ENCODE measurements at regions of chr3 and their contacts with region 1.

Region 1: DNA sequence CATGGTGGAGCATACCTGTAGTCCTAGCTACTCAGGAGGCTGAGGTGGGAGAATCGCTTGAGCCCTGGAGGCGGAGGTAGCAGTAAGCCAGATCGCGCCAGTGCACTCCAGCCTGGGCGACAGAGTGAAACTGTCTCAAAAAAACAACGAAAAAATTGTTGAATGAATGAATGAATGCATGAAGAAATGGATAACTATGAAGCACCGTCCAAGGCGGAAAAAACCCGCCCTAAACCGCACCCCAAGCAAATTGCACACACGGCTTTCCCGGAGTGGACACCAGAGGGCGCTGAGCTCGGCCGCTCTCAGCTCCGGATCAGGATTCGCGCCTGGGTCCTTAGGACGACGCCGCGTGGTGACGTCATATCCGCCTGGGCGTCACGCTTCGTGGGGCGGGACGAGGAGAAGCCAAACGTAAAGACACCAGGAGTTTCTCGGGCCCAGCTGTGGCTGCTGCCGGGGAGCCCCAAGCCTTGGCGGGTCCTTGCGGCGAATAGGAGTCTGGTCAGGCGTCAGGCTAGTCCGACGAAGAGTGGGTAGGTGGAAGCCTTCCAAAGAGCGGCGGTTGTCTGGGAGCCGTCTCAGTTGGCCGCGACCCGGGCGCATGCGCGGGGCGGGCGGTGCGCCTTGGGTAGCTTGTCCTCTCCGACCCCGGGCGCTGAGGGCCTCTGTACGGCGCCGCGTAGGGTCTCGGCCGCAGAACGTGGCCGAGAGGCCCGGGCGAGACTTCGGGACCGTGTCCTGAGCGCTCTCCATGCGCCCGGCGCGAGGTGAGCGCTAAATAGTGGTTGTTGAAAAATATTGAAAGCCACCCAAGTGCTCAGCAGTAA is at the starts of genes HTD2 and RPP14:
- DNase-seq: peak; percentile 99
- ATAC-seq: peak; percentile 90
- H3K4me3 Mint-ChIP-seq: peak within 1 kb of the TSS; percentile 97
- H3K27ac Mint-ChIP-seq: peak within 1 kb of the TSS; percentile 97
- H3K4me1 Mint-ChIP-seq: peaks cover 30% of the 10 kb centered on the region
- H3K27me3 Mint-ChIP-seq: peaks cover 2% of the 10 kb centered on the region
- total RNA-seq, gene HTD2: 2.3 to 7.9 TPM
- total RNA-seq, gene RPP14: 16.4 to 16.9 TPM

Region 2: DNA sequence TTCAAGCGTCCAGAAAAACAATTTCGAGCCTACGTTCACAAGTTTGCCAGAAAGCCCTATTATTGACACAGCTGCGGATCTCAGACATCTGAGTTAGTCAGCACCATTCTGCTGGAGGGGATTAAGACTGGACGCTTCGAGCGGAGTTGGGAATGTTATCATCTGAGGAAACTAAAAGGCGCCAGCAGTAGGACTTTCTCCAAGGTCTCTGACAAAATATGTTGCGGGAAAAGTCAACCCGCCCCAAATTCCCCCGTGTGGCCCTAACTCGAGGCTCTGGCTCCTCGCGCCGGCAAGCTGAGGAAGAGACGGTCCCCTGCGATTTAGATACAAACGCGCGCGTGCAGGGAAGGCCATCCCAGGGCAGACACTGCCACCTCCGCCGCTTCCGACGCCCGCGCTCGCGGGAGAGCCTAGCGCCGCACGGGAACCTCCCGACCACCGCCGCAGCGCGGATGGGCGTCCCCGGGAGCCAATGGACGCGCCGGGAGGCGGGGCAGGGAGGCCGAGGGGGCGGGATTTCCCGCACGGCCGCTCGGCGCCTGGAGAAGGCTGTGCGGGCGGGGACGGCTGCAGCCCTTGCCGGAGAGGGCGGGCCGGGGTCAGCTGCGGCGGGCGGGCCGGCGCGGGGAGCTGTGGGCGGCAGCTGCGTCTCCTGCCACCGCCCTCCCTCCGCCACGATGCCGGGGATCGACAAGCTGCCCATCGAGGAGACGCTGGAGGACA is 1078.7 kb before region 1 on chr3 and contains the start of gene APPL1:
- CTCF ChIA-PET with region 1: no interaction called
- POLR2A ChIA-PET with region 1: no interaction called
- intact Hi-C with region 1: loop called in 1 of 2 experiments (anchors 1 kb)
- DNase-seq: peak; percentile 94
- ATAC-seq: peak; percentile 92
- H3K4me3 Mint-ChIP-seq: peak within 1 kb of the TSS; percentile 88
- H3K27ac Mint-ChIP-seq: peak within 1 kb of the TSS; percentile 78
- H3K4me1 Mint-ChIP-seq: peaks cover 29% of the 10 kb centered on the region
- H3K27me3 Mint-ChIP-seq: no peaks in the 10 kb centered on the region
- total RNA-seq, gene APPL1: 38.4 to 39.4 TPM

Region 3: DNA sequence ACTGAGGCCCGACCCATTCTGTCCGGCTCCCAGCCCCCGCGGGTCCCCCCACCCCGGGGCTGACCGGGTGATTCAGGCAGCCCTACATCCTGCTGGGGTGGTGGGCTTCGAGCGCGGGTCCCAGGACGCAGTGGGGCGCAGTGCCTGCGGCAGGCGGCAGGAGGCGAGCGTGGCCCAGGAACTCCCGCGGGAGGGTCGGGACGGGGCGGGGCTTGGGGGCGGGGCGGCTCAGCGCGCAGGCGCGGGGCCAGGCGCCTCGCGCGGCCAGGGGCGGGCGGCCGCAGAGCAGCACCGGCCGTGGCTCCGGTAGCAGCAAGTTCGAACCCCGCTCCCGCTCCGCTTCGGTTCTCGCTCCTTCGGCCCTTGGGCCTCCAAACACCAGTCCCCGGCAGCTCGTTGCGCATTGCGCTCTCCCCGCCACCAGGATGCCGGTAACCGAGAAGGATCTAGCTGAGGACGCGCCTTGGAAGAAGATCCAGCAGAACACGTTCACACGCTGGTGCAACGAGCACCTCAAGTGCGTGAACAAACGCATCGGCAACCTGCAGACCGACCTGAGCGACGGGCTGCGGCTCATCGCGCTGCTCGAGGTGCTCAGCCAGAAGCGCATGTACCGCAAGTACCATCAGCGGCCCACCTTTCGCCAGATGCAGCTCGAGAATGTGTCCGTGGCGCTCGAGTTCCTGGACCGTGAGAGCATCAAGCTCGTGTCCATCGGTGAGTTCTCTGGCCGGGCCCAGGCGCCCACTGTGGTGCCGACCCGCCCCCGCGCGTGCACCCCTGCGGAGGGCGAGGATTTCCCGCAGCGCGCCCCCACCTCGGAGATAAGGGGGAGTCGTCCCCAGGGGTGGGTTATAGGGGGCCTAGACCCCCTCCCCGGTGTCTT is 297.7 kb before region 1 on chr3 and contains the start of gene FLNB:
- CTCF ChIA-PET with region 1: interaction called, 4 read pairs
- POLR2A ChIA-PET with region 1: no interaction called
- intact Hi-C with region 1: loop called in 1 of 2 experiments (anchors 1 kb)
- DNase-seq: peak; percentile 91
- ATAC-seq: peak; percentile 80
- H3K4me3 Mint-ChIP-seq: peak within 1 kb of the TSS; percentile 88
- H3K27ac Mint-ChIP-seq: peak within 1 kb of the TSS; percentile 89
- H3K4me1 Mint-ChIP-seq: peaks cover 38% of the 10 kb centered on the region
- H3K27me3 Mint-ChIP-seq: no peaks in the 10 kb centered on the region
- total RNA-seq, gene FLNB: 25.4 to 29.1 TPM

Region 4: DNA sequence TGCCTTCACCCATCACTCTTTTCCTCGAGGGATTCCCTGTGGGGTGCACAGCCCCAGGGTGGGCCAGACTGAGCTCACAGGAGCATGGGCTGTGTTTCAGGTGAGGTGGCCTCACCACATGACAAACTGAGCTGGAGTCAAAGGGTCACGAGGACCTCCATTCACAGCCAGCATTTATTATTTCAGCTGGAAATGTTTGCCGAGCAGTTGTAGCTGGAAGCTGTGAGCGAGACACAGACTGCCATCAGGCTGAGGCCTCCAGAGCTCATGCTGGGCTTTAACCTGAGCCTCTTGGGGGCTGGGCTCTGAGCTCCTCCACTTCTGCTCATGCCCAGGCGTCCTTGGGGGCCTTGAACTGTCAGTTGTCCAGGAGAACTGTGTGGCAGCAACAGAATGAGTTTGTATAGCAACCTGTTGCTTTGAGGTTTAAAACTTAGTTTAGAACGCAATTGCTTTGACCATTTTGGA is 240.4 kb before region 1 on chr3:
- CTCF ChIA-PET with region 1: no interaction called
- POLR2A ChIA-PET with region 1: no interaction called
- intact Hi-C with region 1: no loop called
- DNase-seq: no peak
- ATAC-seq: no peak
- H3K4me3 Mint-ChIP-seq: no peak overlapping the region
- H3K27ac Mint-ChIP-seq: no peak overlapping the region
- H3K4me1 Mint-ChIP-seq: peaks cover 14% of the 10 kb centered on the region
- H3K27me3 Mint-ChIP-seq: no peaks in the 10 kb centered on the region

Region 5: DNA sequence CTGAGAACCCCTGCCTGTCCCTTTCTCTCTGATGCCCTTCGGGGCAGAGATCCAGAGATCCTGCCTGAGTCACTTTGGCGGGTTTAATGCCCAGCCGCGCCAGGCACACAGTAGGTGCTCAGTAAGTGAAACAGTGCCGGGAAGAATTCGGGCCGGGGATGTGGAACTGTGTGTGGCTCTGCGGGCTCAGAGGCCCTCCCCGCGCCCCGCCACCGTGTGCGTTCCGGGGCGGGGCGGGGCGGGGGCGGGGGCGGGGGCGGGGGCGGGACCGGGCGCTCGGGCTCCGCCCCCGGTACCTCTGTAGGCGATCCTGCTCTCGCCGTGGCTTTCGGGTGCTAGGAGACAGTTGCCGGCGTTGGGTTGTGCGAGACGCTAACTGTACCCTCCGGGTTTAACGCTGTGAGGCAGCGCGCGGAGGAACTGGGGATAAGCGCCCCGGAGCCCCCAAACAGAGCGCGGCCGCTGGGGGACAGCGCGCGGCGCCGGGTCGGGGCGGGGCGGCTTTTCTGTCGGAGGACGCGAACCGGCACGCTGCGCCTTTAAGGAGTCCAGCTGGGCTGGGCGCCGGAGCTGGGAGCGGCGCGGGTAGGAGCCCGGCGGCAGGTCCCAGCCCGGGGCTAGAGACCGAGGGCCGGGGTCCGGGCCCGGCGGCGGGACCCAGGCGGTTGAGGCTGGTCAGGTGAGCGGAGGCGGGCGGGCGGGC is 68.7 kb before region 1 on chr3 and contains the start of gene ABHD6:
- CTCF ChIA-PET with region 1: interaction called, 7 read pairs
- POLR2A ChIA-PET with region 1: no interaction called
- intact Hi-C with region 1: loop called (anchors 1 to 2 kb)
- DNase-seq: peak; percentile 88
- ATAC-seq: peak; percentile 81
- H3K4me3 Mint-ChIP-seq: peak within 1 kb of the TSS; percentile 82
- H3K27ac Mint-ChIP-seq: peak within 1 kb of the TSS; percentile 71
- H3K4me1 Mint-ChIP-seq: peaks cover 10% of the 10 kb centered on the region
- H3K27me3 Mint-ChIP-seq: peaks cover 3% of the 10 kb centered on the region
- total RNA-seq, gene ABHD6: 3.0 to 3.5 TPM

Region 6: GRCh38 chr3:58332575-58333188 is 26.6 kb after region 1 on chr3 and contains the start of gene PXK:
- CTCF ChIA-PET with region 1: interaction called, 58 read pairs
- POLR2A ChIA-PET with region 1: interaction called, 4 read pairs
- intact Hi-C with region 1: loop called (anchors 1 to 2 kb)
- DNase-seq: peak; percentile 89
- ATAC-seq: peak; percentile 84
- H3K4me3 Mint-ChIP-seq: peak within 1 kb of the TSS; percentile 100
- H3K27ac Mint-ChIP-seq: peak within 1 kb of the TSS; percentile 96
- H3K4me1 Mint-ChIP-seq: peaks cover 30% of the 10 kb centered on the region
- H3K27me3 Mint-ChIP-seq: no peaks in the 10 kb centered on the region
- total RNA-seq, gene PXK: 35.2 to 50.7 TPM

Region 7: DNA sequence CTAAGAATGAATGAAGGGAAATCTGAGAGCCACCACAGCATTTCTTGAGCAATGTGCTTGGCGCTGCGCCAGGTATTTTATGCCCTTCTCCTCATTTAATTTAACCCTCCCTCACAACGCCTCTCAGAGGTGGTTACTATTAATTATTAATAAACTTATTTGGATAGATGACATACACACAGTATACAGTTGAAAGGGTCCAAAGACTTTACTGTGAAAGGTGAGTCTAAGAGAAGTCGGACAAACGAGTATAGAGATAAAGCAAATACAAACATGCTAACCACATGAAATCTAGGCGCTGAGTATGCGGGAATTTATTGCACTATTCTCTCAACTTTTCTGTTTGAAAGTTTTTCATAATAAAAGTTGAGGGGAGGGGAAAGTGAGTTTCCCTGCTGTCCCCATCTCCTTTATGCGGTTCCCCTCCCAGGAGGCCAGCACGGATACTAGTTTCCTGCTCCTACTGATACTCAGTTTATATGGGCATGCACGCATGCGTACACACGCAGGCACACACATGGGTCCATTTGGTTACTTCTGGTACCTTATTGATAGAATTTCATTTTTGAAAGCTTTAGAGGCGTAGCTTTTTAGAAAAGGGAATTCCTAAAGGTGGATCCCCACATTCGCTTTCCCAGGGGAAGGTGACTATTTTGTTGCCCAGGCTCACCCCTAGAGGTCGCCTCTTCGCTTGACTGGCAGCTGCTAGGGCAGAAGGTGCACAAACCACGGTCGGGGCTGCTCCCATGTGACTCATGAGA is 157.3 kb after region 1 on chr3:
- CTCF ChIA-PET with region 1: interaction called, 8 read pairs
- POLR2A ChIA-PET with region 1: no interaction called
- intact Hi-C with region 1: loop called (anchors 1 to 5 kb)
- DNase-seq: peak; percentile 91
- ATAC-seq: peak; percentile 97
- H3K4me3 Mint-ChIP-seq: no peak overlapping the region
- H3K27ac Mint-ChIP-seq: peak overlapping the region; percentile 25
- H3K4me1 Mint-ChIP-seq: peaks cover 14% of the 10 kb centered on the region
- H3K27me3 Mint-ChIP-seq: no peaks in the 10 kb centered on the region

Region 8: GRCh38 chr3:58630076-58630709 is 324.1 kb after region 1 on chr3:
- CTCF ChIA-PET with region 1: interaction called, 9 read pairs
- POLR2A ChIA-PET with region 1: no interaction called
- intact Hi-C with region 1: loop called (anchors 1 to 2 kb)
- DNase-seq: peak; percentile 77
- ATAC-seq: peak; percentile 66
- H3K4me3 Mint-ChIP-seq: no peak overlapping the region
- H3K27ac Mint-ChIP-seq: no peak overlapping the region
- H3K4me1 Mint-ChIP-seq: no peaks in the 10 kb centered on the region
- H3K27me3 Mint-ChIP-seq: peaks cover 5% of the 10 kb centered on the region

Measured in activated CD4-positive, alpha-beta T cell treated with anti-CD3 and anti-CD28 coated beads for 36 hours (primary cell).